ENCODE measurements at regions of chr16 and their contacts with region 1.

Region 1: DNA sequence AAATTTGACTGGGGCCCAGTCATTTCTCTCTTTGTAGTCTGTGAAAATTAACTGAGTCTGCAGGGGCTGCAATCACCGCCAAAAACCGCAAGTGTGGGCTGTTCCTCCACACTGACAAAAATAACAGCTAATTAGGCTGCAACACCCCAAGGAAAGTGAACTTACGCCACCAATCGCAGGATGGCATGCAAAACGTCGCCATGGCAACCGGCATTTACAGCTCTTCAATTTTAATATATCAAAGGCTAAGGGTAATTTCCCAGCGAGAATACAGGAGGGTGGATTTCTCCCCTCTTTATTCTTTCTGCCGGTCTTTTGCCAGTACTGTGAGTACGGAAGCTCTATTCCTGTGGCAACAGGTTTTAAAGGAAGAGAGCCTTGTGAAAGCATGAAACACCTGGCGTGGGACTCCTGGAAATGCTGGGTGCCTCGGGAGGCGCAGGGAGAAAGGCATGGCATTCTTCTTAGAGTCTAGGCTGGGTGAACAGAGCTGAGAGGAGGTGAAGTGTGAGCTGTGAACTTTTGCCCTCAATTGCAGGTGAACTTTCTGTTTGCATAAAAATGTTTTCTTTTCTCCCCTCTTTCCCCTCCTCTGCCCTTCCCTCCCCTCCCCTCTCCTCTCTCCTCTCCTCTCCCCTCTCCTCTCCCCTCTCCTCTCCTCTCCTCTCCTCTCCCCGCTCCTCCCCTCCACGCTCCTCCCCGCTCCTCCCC is 399.7 kb downstream of the XYLT1 start:
- DNase-seq: peak; percentile 92
- ATAC-seq: peak; percentile 81
- H3K4me3 ChIP-seq: peak overlapping the region in 4 of 5 experiments; percentile 42 to 57 (median 56)
- H3K4me3 Mint-ChIP-seq: peak overlapping the region; percentile 95
- H3K27ac ChIP-seq: peak overlapping the region; percentile 89 to 91
- H3K27ac Mint-ChIP-seq: peak overlapping the region; percentile 97
- H3K4me1 ChIP-seq: peaks cover 37 to 40% of the 10 kb centered on the region in 2 donors
- H3K4me1 Mint-ChIP-seq: peaks cover 52% of the 10 kb centered on the region
- H3K27me3 ChIP-seq: no peaks in the 10 kb centered on the region
- H3K27me3 Mint-ChIP-seq: no peaks in the 10 kb centered on the region
- CTCF ChIP-seq: no peak

Region 2: DNA sequence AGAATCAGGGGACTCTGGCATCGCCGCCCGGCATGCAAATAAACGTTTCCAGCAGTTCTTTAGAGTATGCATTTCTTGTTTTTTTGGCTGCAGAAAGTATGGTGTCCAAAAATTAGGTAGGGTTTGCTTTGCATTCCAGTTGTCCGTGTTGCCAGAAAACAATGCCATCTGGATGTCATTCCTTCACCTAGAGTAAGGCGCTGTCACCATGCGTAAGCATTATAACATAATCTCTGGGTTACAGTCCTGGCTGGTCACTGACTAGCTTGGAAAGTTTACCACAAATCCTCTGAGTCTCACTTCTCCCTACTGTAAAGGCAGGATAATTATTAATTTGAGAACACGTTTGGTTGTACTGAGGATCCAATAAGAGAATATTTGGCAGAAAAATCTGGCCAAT is 58.0 kb before region 1 on chr16:
- CTCF ChIA-PET with region 1: no interaction called
- POLR2A ChIA-PET with region 1: no interaction called
- intact Hi-C with region 1: loop called (anchors 1 kb)
- DNase-seq: no peak
- ATAC-seq: no peak
- H3K4me3 ChIP-seq: peak overlapping the region in 4 of 5 experiments; percentile 54 to 80 (median 72)
- H3K4me3 Mint-ChIP-seq: peak overlapping the region; percentile 96
- H3K27ac ChIP-seq: peak overlapping the region; percentile 77 to 88
- H3K27ac Mint-ChIP-seq: peak overlapping the region; percentile 96
- H3K4me1 ChIP-seq: peaks cover 7 to 16% of the 10 kb centered on the region in 2 donors
- H3K4me1 Mint-ChIP-seq: peaks cover 34% of the 10 kb centered on the region
- H3K27me3 ChIP-seq: no peaks in the 10 kb centered on the region
- H3K27me3 Mint-ChIP-seq: no peaks in the 10 kb centered on the region
- CTCF ChIP-seq: no peak

Measured in B cell (primary cell).